PC-3 (cell line): ENCODE measurements at regions of chr17 and their contacts with region 1.

Region 1: GRCh38 chr17:55437159-55437605 is 15.5 kb upstream of the MMD start:
- DNase-seq: no peak
- ATAC-seq: no peak
- H3K4me3 ChIP-seq: no peak overlapping the region
- H3K27ac ChIP-seq: no peak overlapping the region
- H3K4me1 ChIP-seq: peaks cover 27% of the 10 kb centered on the region
- H3K27me3 ChIP-seq: no peaks in the 10 kb centered on the region
- CTCF ChIP-seq: no peak

Region 2: GRCh38 chr17:53548252-53548651 is 1888.9 kb before region 1 on chr17:
- CTCF ChIA-PET with region 1: no interaction called
- POLR2A ChIA-PET with region 1: no interaction called
- intact Hi-C with region 1: no loop called
- DNase-seq: no peak
- ATAC-seq: no peak
- H3K4me3 ChIP-seq: no peak overlapping the region
- H3K27ac ChIP-seq: no peak overlapping the region
- H3K4me1 ChIP-seq: no peaks in the 10 kb centered on the region
- H3K27me3 ChIP-seq: no peaks in the 10 kb centered on the region
- CTCF ChIP-seq: no peak

Region 3: GRCh38 chr17:55161935-55162555 is 275.1 kb before region 1 on chr17:
- CTCF ChIA-PET with region 1: no interaction called
- POLR2A ChIA-PET with region 1: no interaction called
- intact Hi-C with region 1: loop called (anchors 10 kb)
- DNase-seq: peak; percentile 99
- ATAC-seq: peak; percentile 85
- H3K4me3 ChIP-seq: no peak overlapping the region
- H3K27ac ChIP-seq: peak overlapping the region; percentile 79
- H3K4me1 ChIP-seq: peaks cover 56% of the 10 kb centered on the region
- H3K27me3 ChIP-seq: no peaks in the 10 kb centered on the region
- CTCF ChIP-seq: no peak

Region 4: DNA sequence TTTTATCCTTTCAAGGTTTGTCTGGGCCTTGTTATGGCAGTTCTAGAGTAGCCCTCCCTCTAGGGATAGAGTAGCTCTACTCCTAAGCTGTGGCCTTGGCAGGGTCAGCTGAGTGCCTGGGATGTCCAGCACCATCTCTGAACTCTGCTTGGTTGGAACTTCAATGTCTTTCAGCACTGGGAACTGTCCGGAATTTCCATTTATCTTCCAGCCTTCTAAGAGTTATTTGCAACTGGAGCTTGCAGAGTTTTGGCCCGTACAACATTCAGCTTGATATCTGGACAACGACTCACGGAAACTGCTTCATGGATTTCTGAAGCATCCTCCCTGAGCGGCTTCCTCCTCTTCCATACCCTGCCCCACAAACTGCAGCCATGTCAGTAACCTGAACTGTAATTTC is 38.5 kb before region 1 on chr17:
- CTCF ChIA-PET with region 1: no interaction called
- POLR2A ChIA-PET with region 1: no interaction called
- intact Hi-C with region 1: loop called (anchors 2 kb)
- DNase-seq: no peak
- ATAC-seq: no peak
- H3K4me3 ChIP-seq: no peak overlapping the region
- H3K27ac ChIP-seq: no peak overlapping the region
- H3K4me1 ChIP-seq: peaks cover 15% of the 10 kb centered on the region
- H3K27me3 ChIP-seq: no peaks in the 10 kb centered on the region
- CTCF ChIP-seq: no peak

Region 5: GRCh38 chr17:55421179-55421934 is 15.8 kb before region 1 on chr17 and contains the start of gene MMD:
- CTCF ChIA-PET with region 1: interaction called, 3 read pairs
- POLR2A ChIA-PET with region 1: no interaction called
- intact Hi-C with region 1: loop called (anchors 1 kb)
- DNase-seq: peak; percentile 34
- ATAC-seq: peak; percentile 53
- H3K4me3 ChIP-seq: peak within 1 kb of the TSS; percentile 92
- H3K27ac ChIP-seq: peak within 1 kb of the TSS; percentile 16; the same call in 1 of the 2 replicates
- H3K4me1 ChIP-seq: peaks cover 13% of the 10 kb centered on the region
- H3K27me3 ChIP-seq: peaks cover 14% of the 10 kb centered on the region
- CTCF ChIP-seq: no peak
- total RNA-seq, gene MMD: 10.9 and 24.1 TPM in 2 replicates

Region 6: GRCh38 chr17:55452139-55452790 is 15.1 kb after region 1 on chr17:
- CTCF ChIA-PET with region 1: interaction called, 5 read pairs
- POLR2A ChIA-PET with region 1: no interaction called
- intact Hi-C with region 1: loop called (anchors 1 kb)
- DNase-seq: peak; percentile 95
- ATAC-seq: peak; percentile 54
- H3K4me3 ChIP-seq: no peak overlapping the region
- H3K27ac ChIP-seq: peak overlapping the region; percentile 70
- H3K4me1 ChIP-seq: peaks cover 61% of the 10 kb centered on the region
- H3K27me3 ChIP-seq: no peaks in the 10 kb centered on the region
- CTCF ChIP-seq: no peak

Region 7: GRCh38 chr17:55458977-55459376 is 21.8 kb after region 1 on chr17:
- CTCF ChIA-PET with region 1: interaction called, 5 read pairs
- POLR2A ChIA-PET with region 1: no interaction called
- intact Hi-C with region 1: loop called (anchors 1 kb)
- DNase-seq: peak; percentile 95
- ATAC-seq: peak; percentile 54
- H3K4me3 ChIP-seq: no peak overlapping the region
- H3K27ac ChIP-seq: peak overlapping the region; percentile 77
- H3K4me1 ChIP-seq: peaks cover 46% of the 10 kb centered on the region
- H3K27me3 ChIP-seq: no peaks in the 10 kb centered on the region
- CTCF ChIP-seq: no peak

Region 8: GRCh38 chr17:55496094-55496881 is 59.1 kb after region 1 on chr17:
- CTCF ChIA-PET with region 1: no interaction called
- POLR2A ChIA-PET with region 1: interaction called, 4 read pairs
- intact Hi-C with region 1: loop called (anchors 1 kb)
- DNase-seq: no peak
- ATAC-seq: no peak
- H3K4me3 ChIP-seq: no peak overlapping the region
- H3K27ac ChIP-seq: no peak overlapping the region
- H3K4me1 ChIP-seq: peaks cover 16% of the 10 kb centered on the region
- H3K27me3 ChIP-seq: no peaks in the 10 kb centered on the region
- CTCF ChIP-seq: no peak